ENCODE measurements at regions of chr19 and their contacts with region 1.

Region 1: GRCh38 chr19:55258828-55259539 is at the start of gene PPP6R1:
- DNase-seq: peak; percentile 96
- ATAC-seq: peak; percentile 81
- H3K4me3 Mint-ChIP-seq: peak within 1 kb of the TSS; percentile 99
- H3K27ac Mint-ChIP-seq: peak within 1 kb of the TSS; percentile 100
- H3K4me1 Mint-ChIP-seq: peaks cover 27% of the 10 kb centered on the region
- H3K27me3 Mint-ChIP-seq: no peaks in the 10 kb centered on the region
- total RNA-seq, gene PPP6R1: 263 to 291 TPM

Region 2: GRCh38 chr19:55279770-55280643 is 21.0 kb after region 1 on chr19 and contains the start of gene HSPBP1:
- CTCF ChIA-PET with region 1: interaction called, 19 read pairs
- DNase-seq: peak; percentile 98
- ATAC-seq: peak; percentile 89
- H3K4me3 Mint-ChIP-seq: peak within 1 kb of the TSS; percentile 91
- H3K27ac Mint-ChIP-seq: peak within 1 kb of the TSS; percentile 98
- H3K4me1 Mint-ChIP-seq: peaks cover 62% of the 10 kb centered on the region
- H3K27me3 Mint-ChIP-seq: peaks cover 4% of the 10 kb centered on the region
- total RNA-seq, gene HSPBP1: 35.0 to 38.2 TPM

Region 3: DNA sequence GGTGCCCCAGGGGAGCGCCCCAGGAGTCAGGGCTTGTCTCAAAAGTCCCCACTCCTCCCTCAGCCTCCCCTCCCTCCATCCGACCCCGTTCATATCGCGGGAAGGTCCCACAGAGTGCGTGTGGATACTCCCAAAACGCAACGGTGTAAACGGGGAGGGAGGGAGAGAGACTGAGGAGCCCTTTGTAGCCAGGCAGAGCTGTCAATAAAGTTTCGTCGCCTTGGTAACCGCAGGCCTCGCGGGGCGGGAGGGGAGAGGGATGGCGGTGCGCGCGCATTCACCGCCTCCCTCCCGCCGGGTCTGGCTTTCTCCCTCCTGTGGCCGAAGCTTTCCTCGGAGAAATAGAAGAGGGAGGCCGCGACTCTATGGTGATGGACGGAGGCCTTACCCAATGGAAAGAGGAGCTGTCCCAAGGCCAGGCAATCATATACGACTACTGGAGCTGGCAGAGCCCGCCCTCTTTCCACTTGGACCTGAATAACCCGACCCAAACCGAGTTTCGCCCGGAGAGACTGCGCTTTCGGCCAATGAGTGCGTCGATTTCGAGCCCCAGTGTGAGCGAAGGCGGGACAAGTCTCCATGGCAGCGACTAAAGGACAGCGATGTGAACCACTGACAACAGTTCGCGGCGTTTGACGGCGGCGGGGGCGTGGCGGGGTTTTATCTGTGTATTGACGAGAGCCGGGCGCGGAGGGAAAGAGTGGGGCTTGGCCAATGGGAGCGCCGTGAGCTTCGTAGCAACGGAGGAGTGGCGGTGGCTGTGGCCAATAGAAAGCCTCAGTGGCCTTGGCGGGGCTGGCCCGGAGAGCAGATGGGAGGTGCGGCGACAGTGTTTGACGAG is 80.3 kb after region 1 on chr19 and contains the start of gene KMT5C:
- CTCF ChIA-PET with region 1: interaction called, 10 read pairs
- DNase-seq: peak; percentile 100
- ATAC-seq: peak; percentile 87
- H3K4me3 Mint-ChIP-seq: peak within 1 kb of the TSS; percentile 73
- H3K27ac Mint-ChIP-seq: peak within 1 kb of the TSS; percentile 90
- H3K4me1 Mint-ChIP-seq: peaks cover 17% of the 10 kb centered on the region
- H3K27me3 Mint-ChIP-seq: peaks cover 14% of the 10 kb centered on the region
- total RNA-seq, gene KMT5C: 26.4 to 35.3 TPM

Measured in activated CD8-positive, alpha-beta memory T cell treated with anti-CD3 and anti-CD28 coated beads, Interleukin-2, amount 10 ng/mL, durations not matched to agents 7 days and 5 days (primary cell).